Endothelial cell of umbilical vein (primary cell): ENCODE measurements at regions of chr11 and their contacts with region 1.

Region 1: DNA sequence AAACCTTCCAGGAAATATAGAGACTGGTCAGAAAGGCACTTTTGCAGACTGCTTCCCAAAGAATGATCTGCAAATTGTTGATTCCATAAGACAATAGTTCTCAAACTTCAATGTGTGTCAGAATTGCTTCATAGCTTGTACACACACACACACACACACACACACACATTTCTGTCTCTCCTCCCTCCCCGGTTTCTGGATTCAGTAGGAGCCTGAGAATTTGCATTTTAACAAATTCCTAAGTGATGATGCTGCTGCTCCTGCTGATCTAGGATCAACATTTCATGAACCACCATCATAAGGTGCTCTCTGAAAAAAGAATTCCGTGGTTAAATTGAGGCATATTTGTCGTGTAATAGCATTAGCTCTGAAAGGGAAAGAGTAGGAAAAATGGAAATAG is 35.3 kb upstream of the FZD4 start:
- DNase-seq: no peak
- H3K4me3 ChIP-seq: no peak overlapping the region
- H3K27ac ChIP-seq: no peak overlapping the region
- H3K4me1 ChIP-seq: peaks cover 10% of the 10 kb centered on the region
- H3K27me3 ChIP-seq: no peaks in the 10 kb centered on the region
- CTCF ChIP-seq: no peak
- POLR2A ChIP-seq: no peak

Region 2: DNA sequence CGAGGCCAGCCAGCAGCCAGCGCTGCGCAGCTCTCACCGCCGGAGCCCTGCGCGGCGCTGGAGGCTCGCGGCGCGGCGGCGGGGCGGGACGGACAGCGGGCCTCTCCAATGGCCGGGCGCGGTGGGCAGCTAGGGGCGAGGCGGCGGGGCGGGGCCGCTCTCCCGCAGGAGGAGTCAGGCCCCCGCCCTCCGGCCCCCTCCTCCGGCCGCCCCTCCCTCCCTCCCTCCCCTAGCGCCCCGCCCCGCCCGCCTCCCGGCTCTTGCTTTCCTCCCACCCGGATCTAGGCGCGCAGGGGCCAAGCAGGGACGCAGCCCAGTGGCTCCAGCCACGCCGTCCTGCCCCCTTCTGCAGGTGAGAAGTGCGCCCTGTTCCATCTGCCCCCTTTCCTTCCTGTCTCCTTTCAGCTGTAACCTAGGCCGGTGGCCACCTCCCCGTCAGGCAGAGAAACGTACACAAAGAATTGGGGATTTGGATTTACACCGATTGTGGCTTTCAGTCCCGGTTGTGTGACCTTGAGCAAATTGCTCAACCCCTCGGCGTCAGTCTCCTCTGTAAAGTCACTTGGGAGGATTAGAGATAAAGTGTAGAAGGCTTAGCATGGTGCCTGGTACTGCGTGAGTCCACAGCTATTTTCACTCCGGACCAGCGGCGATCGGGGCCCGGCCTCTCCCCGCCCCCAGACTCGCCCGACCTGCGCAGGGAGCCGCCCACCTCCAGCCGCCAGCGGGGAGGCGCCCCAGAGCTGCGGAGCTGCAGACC is 35.0 kb before region 1 on chr11 and contains the start of gene FZD4:
- CTCF ChIA-PET with region 1: interaction called, 48 read pairs
- POLR2A ChIA-PET with region 1: no interaction called
- dilution Hi-C with region 1: no loop called
- intact Hi-C with region 1: no loop called
- DNase-seq: peak; percentile 92
- H3K4me3 ChIP-seq: peak within 1 kb of the TSS; percentile 75 to 98 (median 95)
- H3K27ac ChIP-seq: peak within 1 kb of the TSS; percentile 75
- H3K4me1 ChIP-seq: peaks cover 30% of the 10 kb centered on the region
- H3K27me3 ChIP-seq: no peaks in the 10 kb centered on the region
- CTCF ChIP-seq: peak in 1 of 2 donors; percentile 30
- POLR2A ChIP-seq: peak; percentile 99
- total RNA-seq, gene FZD4: 109 and 112 TPM in 2 replicates

Region 3: DNA sequence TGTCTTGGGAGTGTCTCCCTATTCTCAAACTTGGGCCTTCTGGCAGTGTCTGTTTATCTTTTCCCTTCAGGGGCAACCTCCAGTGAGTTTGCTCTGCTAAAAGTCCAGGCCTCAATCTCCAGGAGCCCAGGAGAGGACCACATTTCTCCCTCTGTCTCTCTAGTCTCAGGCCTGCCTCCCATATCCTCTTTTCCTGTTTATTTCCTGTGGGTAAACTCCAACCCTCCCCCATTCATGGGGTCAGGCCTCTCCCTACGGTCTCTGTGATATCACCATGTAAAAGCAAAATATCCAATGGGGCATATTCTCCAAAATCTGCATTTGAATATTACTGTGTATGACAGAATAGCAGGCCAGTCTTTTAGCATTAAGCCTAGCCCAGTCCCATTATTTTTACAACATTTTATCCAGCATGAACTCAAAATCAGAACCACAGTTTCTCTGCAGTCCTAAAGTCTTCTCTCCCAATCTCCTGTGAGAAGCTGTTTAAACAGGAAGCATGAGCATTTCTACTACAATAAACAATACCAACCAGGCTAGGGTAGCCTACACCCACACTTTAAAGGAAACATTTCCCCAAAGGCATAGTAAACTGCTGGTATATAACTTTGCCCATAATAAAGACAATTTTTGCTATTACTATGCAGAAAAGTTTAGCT is 29.2 kb after region 1 on chr11:
- CTCF ChIA-PET with region 1: interaction called, 13 read pairs
- POLR2A ChIA-PET with region 1: no interaction called
- dilution Hi-C with region 1: no loop called
- intact Hi-C with region 1: no loop called
- DNase-seq: peak; percentile 58
- H3K4me3 ChIP-seq: no peak overlapping the region
- H3K27ac ChIP-seq: no peak overlapping the region
- H3K4me1 ChIP-seq: peaks cover 12% of the 10 kb centered on the region
- H3K27me3 ChIP-seq: no peaks in the 10 kb centered on the region
- CTCF ChIP-seq: no peak
- POLR2A ChIP-seq: no peak

Region 4: GRCh38 chr11:87046824-87047223 is 56.3 kb after region 1 on chr11:
- CTCF ChIA-PET with region 1: no interaction called
- POLR2A ChIA-PET with region 1: no interaction called
- dilution Hi-C with region 1: no loop called
- intact Hi-C with region 1: no loop called
- DNase-seq: no peak
- H3K4me3 ChIP-seq: no peak overlapping the region
- H3K27ac ChIP-seq: no peak overlapping the region
- H3K4me1 ChIP-seq: no peaks in the 10 kb centered on the region
- H3K27me3 ChIP-seq: no peaks in the 10 kb centered on the region
- CTCF ChIP-seq: no peak
- POLR2A ChIP-seq: no peak

Region 5: GRCh38 chr11:87097582-87097981 is 107.1 kb after region 1 on chr11:
- CTCF ChIA-PET with region 1: interaction called, 17 read pairs
- POLR2A ChIA-PET with region 1: no interaction called
- dilution Hi-C with region 1: no loop called
- intact Hi-C with region 1: no loop called
- DNase-seq: peak; percentile 52
- H3K4me3 ChIP-seq: no peak overlapping the region
- H3K27ac ChIP-seq: no peak overlapping the region
- H3K4me1 ChIP-seq: no peaks in the 10 kb centered on the region
- H3K27me3 ChIP-seq: no peaks in the 10 kb centered on the region
- CTCF ChIP-seq: peak; percentile 33 to 65
- POLR2A ChIP-seq: no peak

Region 6: DNA sequence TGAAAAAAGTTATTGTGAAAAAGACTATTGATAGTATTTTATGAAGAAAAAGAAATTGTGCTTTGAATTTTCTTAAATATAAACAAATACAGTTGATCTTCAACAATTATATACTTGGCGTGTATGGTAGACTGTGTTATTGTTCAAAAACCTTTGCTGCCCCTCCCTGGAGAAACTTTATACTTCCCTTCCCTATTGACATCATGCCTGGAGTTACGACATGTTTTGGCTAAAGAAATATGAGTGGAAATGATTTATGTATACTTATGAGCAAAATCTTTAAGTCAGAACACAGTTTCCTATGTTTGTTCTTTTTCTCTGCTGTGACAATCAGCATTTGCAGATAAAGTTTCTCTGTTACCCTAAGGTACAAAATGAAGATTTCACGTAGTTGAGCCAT is 291.0 kb after region 1 on chr11:
- CTCF ChIA-PET with region 1: interaction called, 53 read pairs
- POLR2A ChIA-PET with region 1: no interaction called
- dilution Hi-C with region 1: no loop called
- intact Hi-C with region 1: loop called (anchors 1 kb)
- DNase-seq: peak; percentile 96
- H3K4me3 ChIP-seq: no peak overlapping the region
- H3K27ac ChIP-seq: no peak overlapping the region
- H3K4me1 ChIP-seq: peaks cover 9% of the 10 kb centered on the region
- H3K27me3 ChIP-seq: no peaks in the 10 kb centered on the region
- CTCF ChIP-seq: peak in 1 of 2 donors; percentile 22
- POLR2A ChIP-seq: no peak